ENCODE measurements at regions of chr2 and their contacts with region 1.

Region 1: GRCh38 chr2:227219312-227220105 is 55.1 kb downstream of the COL4A3 start:
- DNase-seq: no peak
- ATAC-seq: no peak
- H3K4me3 ChIP-seq: no peak overlapping the region
- H3K27ac ChIP-seq: no peak overlapping the region
- H3K4me1 ChIP-seq: no peaks in the 10 kb centered on the region; the same call in 1 of the 2 replicates
- H3K27me3 ChIP-seq: no peaks in the 10 kb centered on the region
- CTCF ChIP-seq: no peak

Region 2: GRCh38 chr2:225678792-225679191 is 1540.7 kb before region 1 on chr2:
- CTCF ChIA-PET with region 1: no interaction called
- POLR2A ChIA-PET with region 1: no interaction called
- in situ Hi-C with region 1: no loop called
- intact Hi-C with region 1: no loop called
- DNase-seq: no peak
- ATAC-seq: no peak
- H3K4me3 ChIP-seq: no peak overlapping the region
- H3K27ac ChIP-seq: no peak overlapping the region
- H3K4me1 ChIP-seq: no peaks in the 10 kb centered on the region
- H3K27me3 ChIP-seq: no peaks in the 10 kb centered on the region
- CTCF ChIP-seq: no peak

Region 3: GRCh38 chr2:226818930-226819329 is 400.6 kb before region 1 on chr2:
- CTCF ChIA-PET with region 1: no interaction called
- POLR2A ChIA-PET with region 1: interaction called, 12 read pairs
- in situ Hi-C with region 1: no loop called
- intact Hi-C with region 1: no loop called
- DNase-seq: no peak
- ATAC-seq: no peak
- H3K4me3 ChIP-seq: no peak overlapping the region
- H3K27ac ChIP-seq: no peak overlapping the region
- H3K4me1 ChIP-seq: no peaks in the 10 kb centered on the region
- H3K27me3 ChIP-seq: no peaks in the 10 kb centered on the region
- CTCF ChIP-seq: no peak

Region 4: GRCh38 chr2:227043981-227044380 is 175.5 kb before region 1 on chr2:
- CTCF ChIA-PET with region 1: no interaction called
- POLR2A ChIA-PET with region 1: no interaction called
- in situ Hi-C with region 1: no loop called
- intact Hi-C with region 1: no loop called
- DNase-seq: no peak
- ATAC-seq: no peak
- H3K4me3 ChIP-seq: no peak overlapping the region
- H3K27ac ChIP-seq: no peak overlapping the region
- H3K4me1 ChIP-seq: no peaks in the 10 kb centered on the region
- H3K27me3 ChIP-seq: peaks cover 3% of the 10 kb centered on the region; the same call in 1 of the 2 replicates
- CTCF ChIP-seq: no peak

Region 5: GRCh38 chr2:227123697-227124096 is 95.8 kb before region 1 on chr2:
- CTCF ChIA-PET with region 1: no interaction called
- POLR2A ChIA-PET with region 1: interaction called, 11 read pairs
- in situ Hi-C with region 1: no loop called
- intact Hi-C with region 1: no loop called
- DNase-seq: no peak
- ATAC-seq: no peak
- H3K4me3 ChIP-seq: no peak overlapping the region
- H3K27ac ChIP-seq: no peak overlapping the region
- H3K4me1 ChIP-seq: no peaks in the 10 kb centered on the region
- H3K27me3 ChIP-seq: peaks cover 2% of the 10 kb centered on the region; the same call in 1 of the 2 replicates
- CTCF ChIP-seq: no peak

Region 6: DNA sequence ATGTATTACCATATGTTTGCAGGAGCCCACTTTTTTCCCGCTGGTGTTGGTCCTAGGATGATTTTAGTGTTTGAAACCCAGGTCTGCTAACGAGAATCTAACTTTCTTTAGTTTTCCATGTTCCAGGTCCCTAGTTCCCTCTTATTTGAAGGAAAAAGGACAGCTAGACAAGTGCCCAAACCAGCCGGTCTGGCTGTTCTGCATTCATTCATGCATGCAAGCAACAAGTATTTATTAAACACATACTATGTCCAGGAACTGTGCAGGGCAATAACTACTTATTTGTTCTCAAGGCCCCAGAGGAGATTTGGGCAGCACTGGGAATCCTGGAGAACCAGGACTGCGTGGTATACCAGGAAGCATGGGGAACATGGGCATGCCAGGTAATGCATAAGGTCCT is 70.2 kb after region 1 on chr2:
- CTCF ChIA-PET with region 1: no interaction called
- POLR2A ChIA-PET with region 1: no interaction called
- in situ Hi-C with region 1: no loop called
- intact Hi-C with region 1: no loop called
- DNase-seq: no peak
- ATAC-seq: no peak
- H3K4me3 ChIP-seq: no peak overlapping the region
- H3K27ac ChIP-seq: no peak overlapping the region
- H3K4me1 ChIP-seq: no peaks in the 10 kb centered on the region
- H3K27me3 ChIP-seq: no peaks in the 10 kb centered on the region
- CTCF ChIP-seq: no peak